ENCODE measurements at regions of chr6 and their contacts with region 1.

Region 1: DNA sequence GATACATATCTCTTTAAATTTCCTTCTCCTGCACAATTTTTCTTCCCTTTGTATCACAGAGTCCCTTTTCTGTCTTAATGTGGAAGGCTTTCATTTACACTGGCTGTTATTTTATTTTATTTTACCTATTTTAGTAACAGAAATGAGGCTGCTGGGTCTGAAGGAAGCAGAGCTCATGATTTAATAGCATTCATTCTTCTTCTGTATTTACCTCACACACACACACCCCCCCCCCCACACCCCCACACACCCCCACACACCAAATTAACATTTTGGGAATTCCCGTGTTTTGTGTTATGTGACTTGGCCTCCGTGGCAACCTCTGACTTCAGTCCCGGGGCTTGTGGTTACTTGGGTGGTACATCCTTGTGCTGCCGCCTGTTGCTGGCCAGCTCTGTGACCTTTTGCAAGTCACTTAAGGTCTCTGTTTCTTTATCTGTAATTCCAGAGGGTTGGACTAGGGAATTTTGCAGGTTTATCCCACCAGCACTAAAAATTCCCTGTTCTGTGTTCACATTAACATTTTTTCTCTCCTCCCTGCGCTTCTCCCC is 108.8 kb downstream of the TIAM2 start:
- DNase-seq: peak; percentile 6
- ATAC-seq: no peak
- H3K4me3 ChIP-seq: no peak overlapping the region
- H3K4me3 Mint-ChIP-seq: no peak overlapping the region
- H3K27ac ChIP-seq: no peak overlapping the region
- H3K27ac Mint-ChIP-seq: no peak overlapping the region
- H3K4me1 ChIP-seq: no peaks in the 10 kb centered on the region
- H3K4me1 Mint-ChIP-seq: peaks cover 4% of the 10 kb centered on the region
- H3K27me3 ChIP-seq: no peaks in the 10 kb centered on the region
- H3K27me3 Mint-ChIP-seq: peaks cover 9% of the 10 kb centered on the region
- CTCF ChIP-seq: no peak

Region 2: DNA sequence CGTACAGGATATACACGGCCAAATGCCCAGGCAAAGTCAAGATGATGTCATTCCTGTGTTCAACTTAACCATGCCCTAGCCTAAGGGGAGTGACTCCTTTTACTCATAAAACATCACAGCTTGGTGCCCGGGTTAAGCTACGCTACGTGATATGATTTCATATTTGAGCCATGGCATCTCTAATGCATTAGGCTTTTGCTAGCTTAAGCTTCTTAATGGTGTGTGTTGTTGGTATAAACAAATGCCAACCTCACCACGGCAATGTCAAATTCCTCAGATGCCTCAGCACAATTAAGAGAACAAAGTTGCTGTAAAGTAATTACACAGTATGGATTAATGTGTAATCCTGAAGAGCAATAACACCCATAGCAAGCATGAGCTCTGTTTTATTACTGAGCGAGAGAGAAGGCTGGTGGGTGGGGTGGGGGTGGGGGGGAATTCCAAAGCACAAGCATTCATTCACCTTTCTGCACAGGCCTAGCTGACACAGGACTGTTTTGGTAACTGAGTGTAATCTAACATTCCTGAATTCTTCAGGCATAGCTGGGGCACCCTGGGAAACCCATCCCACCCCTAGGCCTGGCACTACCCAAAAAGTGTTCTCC is 548.7 kb before region 1 on chr6:
- CTCF ChIA-PET with region 1: no interaction called
- POLR2A ChIA-PET with region 1: no interaction called
- intact Hi-C with region 1: no loop called
- DNase-seq: no peak
- ATAC-seq: no peak
- H3K4me3 ChIP-seq: no peak overlapping the region
- H3K4me3 Mint-ChIP-seq: no peak overlapping the region
- H3K27ac ChIP-seq: no peak overlapping the region
- H3K27ac Mint-ChIP-seq: no peak overlapping the region
- H3K4me1 ChIP-seq: no peaks in the 10 kb centered on the region
- H3K4me1 Mint-ChIP-seq: no peaks in the 10 kb centered on the region
- H3K27me3 ChIP-seq: no peaks in the 10 kb centered on the region
- H3K27me3 Mint-ChIP-seq: no peaks in the 10 kb centered on the region
- CTCF ChIP-seq: no peak

Region 3: GRCh38 chr6:155259204-155259603 is 155.3 kb after region 1 on chr6:
- CTCF ChIA-PET with region 1: no interaction called
- POLR2A ChIA-PET with region 1: interaction called, 11 read pairs
- intact Hi-C with region 1: no loop called
- DNase-seq: no peak
- ATAC-seq: no peak
- H3K4me3 ChIP-seq: no peak overlapping the region
- H3K4me3 Mint-ChIP-seq: no peak overlapping the region
- H3K27ac ChIP-seq: no peak overlapping the region
- H3K27ac Mint-ChIP-seq: no peak overlapping the region
- H3K4me1 ChIP-seq: peaks cover 3 to 5% of the 10 kb centered on the region in 2 donors
- H3K4me1 Mint-ChIP-seq: peaks cover 11% of the 10 kb centered on the region
- H3K27me3 ChIP-seq: no peaks in the 10 kb centered on the region
- H3K27me3 Mint-ChIP-seq: no peaks in the 10 kb centered on the region
- CTCF ChIP-seq: no peak